ENCODE measurements at regions of chr13 and their contacts with region 1.

Region 1: DNA sequence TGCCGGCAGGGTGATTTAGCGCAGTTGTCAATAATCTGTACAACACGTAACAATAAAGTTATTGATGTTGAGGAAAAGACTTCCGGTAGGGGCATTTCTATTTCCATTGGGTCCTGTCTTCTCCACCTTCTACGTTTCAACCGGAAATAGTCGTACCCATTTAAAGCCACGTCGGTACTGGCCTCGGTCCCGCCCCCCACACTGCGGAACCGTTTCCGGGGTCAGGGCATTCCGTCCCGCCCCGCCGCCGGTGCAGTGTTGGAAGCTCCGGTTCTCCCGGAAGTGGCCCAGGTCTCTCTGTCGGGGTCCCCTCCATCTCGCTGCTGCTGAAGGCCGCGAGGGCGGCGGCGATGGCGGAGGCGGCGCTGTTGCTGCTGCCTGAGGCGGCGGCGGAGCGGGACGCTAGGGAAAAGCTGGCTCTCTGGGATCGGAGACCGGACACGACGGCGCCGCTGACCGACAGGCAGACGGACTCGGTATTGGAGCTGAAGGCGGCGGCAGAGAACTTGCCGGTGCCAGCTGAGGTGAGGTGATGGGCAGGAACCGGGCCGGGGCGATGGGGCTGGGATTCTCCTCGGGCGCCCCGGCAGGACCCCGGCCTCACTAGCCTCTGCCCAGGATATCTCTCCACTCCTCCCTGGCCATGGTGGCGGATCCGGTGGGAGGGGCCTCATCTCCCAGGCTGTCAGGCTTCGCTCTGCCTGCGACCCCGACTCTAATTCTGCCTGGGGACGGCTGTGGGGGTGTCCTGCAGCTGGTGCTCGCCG is at the start of gene COG3:
- DNase-seq: peak; percentile 97
- ATAC-seq: peak; percentile 99
- total RNA-seq, gene COG3: 12.3 TPM

Region 2: GRCh38 chr13:45340422-45340925 is 124.4 kb before region 1 on chr13:
- intact Hi-C with region 1: loop called (anchors 10 kb)
- DNase-seq: peak; percentile 93
- ATAC-seq: peak; percentile 79

Region 3: GRCh38 chr13:45370922-45371406 is 93.9 kb before region 1 on chr13:
- intact Hi-C with region 1: loop called (anchors 5 kb)
- DNase-seq: peak; percentile 83
- ATAC-seq: peak; percentile 88

Region 4: GRCh38 chr13:45417790-45418534 is 46.9 kb before region 1 on chr13 and contains the start of gene SLC25A30:
- intact Hi-C with region 1: loop called (anchors 2 kb)
- DNase-seq: peak; percentile 98
- ATAC-seq: peak; percentile 99
- total RNA-seq, gene SLC25A30: 150 TPM

Region 5: GRCh38 chr13:45439781-45440462 is 24.9 kb before region 1 on chr13:
- intact Hi-C with region 1: loop called (anchors 1 kb)
- DNase-seq: no peak
- ATAC-seq: no peak

Region 6: DNA sequence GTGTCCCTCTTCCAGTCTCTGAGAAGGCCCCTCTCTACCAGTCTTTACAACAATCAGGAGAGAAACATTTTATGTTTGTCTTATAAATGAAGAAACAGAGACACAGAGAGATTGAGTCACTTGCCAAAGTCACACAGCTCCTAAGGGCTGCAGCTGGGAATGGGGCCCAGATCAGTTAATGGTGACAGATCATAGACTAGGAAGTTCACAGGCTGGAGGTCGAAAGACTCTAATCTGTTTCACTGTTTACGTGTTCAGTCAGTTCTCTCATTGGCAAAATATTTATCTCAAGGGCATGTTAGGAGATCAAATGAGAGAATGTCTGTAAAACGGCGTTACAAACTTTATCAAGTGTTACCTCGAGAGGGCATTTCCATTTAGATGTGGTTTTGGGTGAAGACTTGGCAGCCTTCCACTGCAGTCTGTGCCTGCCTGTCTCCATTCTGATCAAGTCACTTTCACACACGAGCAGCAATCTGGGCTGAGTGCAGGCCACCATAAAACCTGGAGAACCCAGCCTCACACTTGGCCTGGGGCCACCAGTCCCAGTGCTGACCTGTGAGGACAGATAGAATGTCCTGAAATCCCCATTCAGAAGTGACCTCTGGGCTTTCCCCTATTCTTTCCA is 321.5 kb after region 1 on chr13:
- intact Hi-C with region 1: no loop called
- DNase-seq: no peak
- ATAC-seq: peak; percentile 27